AG04450 (cell line): ENCODE measurements at regions of chr10 and their contacts with region 1.

Region 1: DNA sequence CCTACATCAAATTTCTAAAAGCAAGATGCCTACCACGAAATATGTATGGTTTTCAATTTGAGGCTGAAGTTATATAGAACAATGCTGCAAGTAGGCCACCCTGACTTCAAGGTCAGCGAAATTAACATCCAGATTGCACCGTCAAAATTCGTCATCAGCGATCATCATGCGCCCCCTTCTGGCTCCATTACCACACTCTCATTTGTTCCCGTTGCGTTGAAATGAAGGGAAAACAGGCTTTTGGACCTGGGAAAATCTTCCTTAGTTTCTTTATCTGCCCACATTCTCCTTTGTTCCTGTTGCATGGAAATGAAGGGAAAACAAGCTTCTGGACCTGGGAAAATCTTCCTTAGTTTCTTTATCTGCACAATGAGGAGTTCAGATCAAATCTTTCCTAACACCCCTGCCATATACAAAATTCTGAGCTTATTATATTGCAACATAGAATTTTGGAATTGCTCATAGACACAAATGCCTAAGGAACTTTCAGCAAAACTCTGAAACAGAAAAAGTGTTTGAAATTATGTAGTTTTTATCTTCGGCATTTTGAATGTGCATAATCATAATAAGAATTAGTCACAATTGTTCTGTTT is 98.2 kb upstream of the PRKCQ start:
- DNase-seq: no peak
- H3K4me3 ChIP-seq: no peak overlapping the region
- H3K27ac ChIP-seq: no peak overlapping the region
- H3K27me3 ChIP-seq: peaks cover 6% of the 10 kb centered on the region
- CTCF ChIP-seq: peak; percentile 70

Region 2: DNA sequence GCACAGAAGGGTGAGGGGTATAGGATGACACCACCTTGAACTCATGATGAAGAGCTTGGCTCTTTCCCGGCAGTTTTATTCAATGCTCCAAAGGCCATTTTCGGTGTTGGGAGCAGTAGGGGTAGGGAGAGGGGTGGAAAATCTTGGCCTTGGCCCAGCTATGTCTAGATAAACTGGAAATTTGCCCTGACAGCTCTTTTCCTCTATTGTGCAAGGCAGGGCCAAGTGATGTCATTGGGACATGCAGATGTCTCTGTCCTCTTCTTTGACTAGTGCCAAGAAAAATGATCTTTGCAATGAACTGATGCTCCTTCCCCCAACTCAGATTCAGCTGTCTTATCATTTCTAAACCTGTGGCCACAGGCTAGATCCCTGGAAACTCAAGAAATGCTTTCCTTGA is 70.5 kb before region 1 on chr10:
- CTCF ChIA-PET with region 1: no interaction called
- POLR2A ChIA-PET with region 1: no interaction called
- DNase-seq: no peak
- H3K4me3 ChIP-seq: no peak overlapping the region
- H3K27ac ChIP-seq: no peak overlapping the region
- H3K27me3 ChIP-seq: no peaks in the 10 kb centered on the region
- CTCF ChIP-seq: no peak

Region 3: GRCh38 chr10:6621536-6621935 is 56.8 kb before region 1 on chr10:
- CTCF ChIA-PET with region 1: no interaction called
- POLR2A ChIA-PET with region 1: no interaction called
- DNase-seq: no peak
- H3K4me3 ChIP-seq: no peak overlapping the region
- H3K27ac ChIP-seq: no peak overlapping the region
- H3K27me3 ChIP-seq: no peaks in the 10 kb centered on the region
- CTCF ChIP-seq: no peak

Region 4: GRCh38 chr10:6695519-6695918 is 17.2 kb after region 1 on chr10:
- CTCF ChIA-PET with region 1: interaction called, 10 read pairs
- POLR2A ChIA-PET with region 1: no interaction called
- DNase-seq: no peak
- H3K4me3 ChIP-seq: no peak overlapping the region
- H3K27ac ChIP-seq: no peak overlapping the region
- H3K27me3 ChIP-seq: no peaks in the 10 kb centered on the region
- CTCF ChIP-seq: no peak